ENCODE measurements at regions of chr3 and their contacts with region 1.

Region 1: GRCh38 chr3:51682079-51682478 is 11.0 kb downstream of the TEX264 start:
- DNase-seq: peak; percentile 76 to 83
- H3K4me3 ChIP-seq: no peak overlapping the region
- H3K4me3 Mint-ChIP-seq: no peak overlapping the region
- H3K27ac Mint-ChIP-seq: no peak overlapping the region
- H3K4me1 ChIP-seq: no peaks in the 10 kb centered on the region
- H3K4me1 Mint-ChIP-seq: no peaks in the 10 kb centered on the region
- H3K27me3 ChIP-seq: no peaks in the 10 kb centered on the region
- H3K27me3 Mint-ChIP-seq: no peaks in the 10 kb centered on the region
- CTCF ChIP-seq: peak; percentile 69 to 82

Region 2: GRCh38 chr3:51391075-51391567 is 291.0 kb before region 1 on chr3 and contains the start of gene RBM15B:
- CTCF ChIA-PET with region 1: no interaction called
- POLR2A ChIA-PET with region 1: no interaction called
- intact Hi-C with region 1: loop called (anchors 5 kb)
- DNase-seq: peak; percentile 97 to 98
- H3K4me3 ChIP-seq: peak within 1 kb of the TSS; percentile 90
- H3K4me3 Mint-ChIP-seq: peak within 1 kb of the TSS; percentile 74
- H3K27ac Mint-ChIP-seq: peak within 1 kb of the TSS; percentile 57
- H3K4me1 ChIP-seq: peaks cover 51% of the 10 kb centered on the region
- H3K4me1 Mint-ChIP-seq: peaks cover 34% of the 10 kb centered on the region
- H3K27me3 ChIP-seq: no peaks in the 10 kb centered on the region
- H3K27me3 Mint-ChIP-seq: no peaks in the 10 kb centered on the region
- CTCF ChIP-seq: peak in 1 of 2 experiments; percentile 87
- total RNA-seq, gene RBM15B: 32.3 and 33.7 TPM in 2 replicates

Region 3: DNA sequence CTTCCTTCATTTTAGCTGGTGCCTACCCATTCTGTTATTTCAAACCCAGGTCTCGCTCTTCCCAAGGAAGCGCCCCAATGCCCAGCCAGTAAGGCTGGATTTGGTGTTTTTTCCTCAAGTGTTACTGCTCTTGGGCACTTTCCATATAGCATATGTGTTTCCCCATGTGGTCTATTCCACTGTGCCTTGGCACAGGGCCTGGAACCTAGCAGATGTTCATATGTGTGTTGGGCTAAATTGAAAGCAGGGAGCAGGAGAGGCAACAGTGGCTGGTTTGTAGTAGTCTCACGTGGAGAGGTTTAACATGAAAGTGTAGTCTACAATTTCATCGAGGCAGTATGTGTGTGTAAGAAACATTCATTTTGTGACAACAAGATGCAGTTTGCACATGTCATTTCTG is 59.2 kb before region 1 on chr3:
- CTCF ChIA-PET with region 1: no interaction called
- POLR2A ChIA-PET with region 1: no interaction called
- intact Hi-C with region 1: no loop called
- DNase-seq: no peak
- H3K4me3 ChIP-seq: no peak overlapping the region
- H3K4me3 Mint-ChIP-seq: no peak overlapping the region
- H3K27ac Mint-ChIP-seq: no peak overlapping the region
- H3K4me1 ChIP-seq: 0 out of 2 replicates have a peak, but pooled peaks cover 3% of the 10 kb centered on the region
- H3K4me1 Mint-ChIP-seq: peaks cover 15% of the 10 kb centered on the region
- H3K27me3 ChIP-seq: no peaks in the 10 kb centered on the region
- H3K27me3 Mint-ChIP-seq: no peaks in the 10 kb centered on the region
- CTCF ChIP-seq: no peak

Region 4: DNA sequence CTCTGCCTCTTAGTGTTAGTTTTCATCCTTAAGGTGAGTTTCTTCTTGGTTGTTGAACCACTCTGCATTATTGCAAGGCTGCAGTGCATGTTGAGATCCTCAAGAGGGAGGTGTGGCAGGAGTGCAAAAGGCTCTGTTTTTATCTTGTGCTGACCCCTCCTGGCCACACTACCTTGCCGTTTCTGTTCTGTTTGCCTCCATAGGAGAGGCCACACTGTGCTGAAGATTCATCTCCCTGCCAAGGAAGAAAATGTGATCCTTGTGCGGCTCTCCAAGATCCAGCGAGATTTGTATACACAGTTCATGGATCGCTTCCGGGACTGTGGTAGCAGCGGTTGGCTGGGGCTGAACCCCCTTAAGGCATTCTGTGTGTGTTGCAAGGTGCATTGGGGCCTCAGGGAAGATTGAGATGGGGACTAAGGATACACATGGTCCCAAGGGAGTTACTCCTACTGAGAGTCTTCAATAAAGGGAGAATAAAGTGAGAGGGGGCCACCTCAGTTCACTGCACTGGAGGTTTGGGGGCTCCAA is 44.1 kb before region 1 on chr3:
- CTCF ChIA-PET with region 1: interaction called, 20 read pairs
- POLR2A ChIA-PET with region 1: no interaction called
- intact Hi-C with region 1: loop called (anchors 1 kb)
- DNase-seq: peak; percentile 73 to 75
- H3K4me3 ChIP-seq: no peak overlapping the region
- H3K4me3 Mint-ChIP-seq: no peak overlapping the region
- H3K27ac Mint-ChIP-seq: no peak overlapping the region
- H3K4me1 ChIP-seq: peaks cover 10% of the 10 kb centered on the region
- H3K4me1 Mint-ChIP-seq: no peaks in the 10 kb centered on the region
- H3K27me3 ChIP-seq: no peaks in the 10 kb centered on the region
- H3K27me3 Mint-ChIP-seq: no peaks in the 10 kb centered on the region
- CTCF ChIP-seq: peak; percentile 96 to 98

Region 5: GRCh38 chr3:51670823-51671733 is 11.0 kb before region 1 on chr3 and contains the start of gene TEX264:
- CTCF ChIA-PET with region 1: interaction called, 10 read pairs
- POLR2A ChIA-PET with region 1: interaction called, 5 read pairs
- intact Hi-C with region 1: loop called (anchors 1 kb)
- DNase-seq: peak; percentile 70 to 81
- H3K4me3 ChIP-seq: peak within 1 kb of the TSS; percentile 70
- H3K4me3 Mint-ChIP-seq: peak within 1 kb of the TSS; percentile 94
- H3K27ac Mint-ChIP-seq: peak within 1 kb of the TSS; percentile 88
- H3K4me1 ChIP-seq: no peaks in the 10 kb centered on the region
- H3K4me1 Mint-ChIP-seq: peaks cover 32% of the 10 kb centered on the region
- H3K27me3 ChIP-seq: no peaks in the 10 kb centered on the region
- H3K27me3 Mint-ChIP-seq: no peaks in the 10 kb centered on the region
- CTCF ChIP-seq: no peak
- total RNA-seq, gene TEX264: 32.4 and 37.9 TPM in 2 replicates

Region 6: DNA sequence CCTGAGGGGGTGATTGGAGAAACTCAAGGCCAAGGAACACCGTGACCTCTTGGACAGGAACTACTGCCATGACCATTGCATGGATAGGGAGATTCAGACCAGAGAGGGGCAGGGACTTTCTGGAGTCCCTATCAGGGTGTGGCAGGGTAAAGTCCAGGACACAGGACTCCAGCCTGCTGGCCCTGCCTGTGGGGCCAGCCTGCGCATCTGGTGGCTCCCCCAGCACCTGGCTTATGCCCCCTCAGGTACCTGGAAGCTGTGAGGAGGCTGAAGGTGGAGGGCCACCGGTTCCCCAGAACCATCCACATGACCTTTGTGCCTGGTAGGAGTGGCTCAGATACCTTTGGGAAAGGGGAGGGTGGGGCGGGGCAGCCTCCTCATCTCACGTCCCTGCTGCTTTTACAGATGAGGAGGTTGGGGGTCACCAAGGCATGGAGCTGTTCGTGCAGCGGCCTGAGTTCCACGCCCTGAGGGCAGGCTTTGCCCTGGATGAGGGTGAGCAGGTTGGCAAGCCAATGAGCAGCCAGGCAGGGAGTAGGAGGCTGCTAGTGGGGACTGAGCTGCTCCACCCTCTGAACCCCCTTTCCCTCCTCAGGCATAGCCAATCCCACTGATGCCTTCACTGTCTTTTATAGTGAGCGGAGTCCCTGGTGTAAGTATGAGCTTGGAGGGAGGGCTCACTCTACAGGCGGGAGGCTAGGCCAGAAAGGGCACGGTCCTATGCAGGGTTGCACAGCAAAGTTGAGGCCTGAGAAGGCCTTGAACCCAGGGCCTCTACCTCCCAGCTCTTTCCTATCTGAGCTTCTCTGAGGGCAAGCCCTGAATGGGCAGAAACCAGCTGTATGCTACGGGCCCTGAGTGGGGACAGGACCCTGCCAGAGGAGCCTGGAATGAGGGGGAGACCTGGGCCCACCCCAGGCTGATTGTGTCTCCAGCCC is 304.2 kb after region 1 on chr3:
- CTCF ChIA-PET with region 1: no interaction called
- POLR2A ChIA-PET with region 1: no interaction called
- intact Hi-C with region 1: no loop called
- DNase-seq: peak; percentile 45 to 74
- H3K4me3 ChIP-seq: 0 out of 2 replicates have a peak overlapping the region, but pooled peaks have one; percentile 14
- H3K4me3 Mint-ChIP-seq: peak overlapping the region; percentile 99
- H3K27ac Mint-ChIP-seq: peak overlapping the region; percentile 90
- H3K4me1 ChIP-seq: peaks cover 44% of the 10 kb centered on the region
- H3K4me1 Mint-ChIP-seq: peaks cover 23% of the 10 kb centered on the region
- H3K27me3 ChIP-seq: no peaks in the 10 kb centered on the region
- H3K27me3 Mint-ChIP-seq: no peaks in the 10 kb centered on the region
- CTCF ChIP-seq: no peak